A673 (cell line): ENCODE measurements at regions of chr19 and their contacts with region 1.

Region 1: GRCh38 chr19:2610637-2611482 is 91.6 kb downstream of the GNG7 start:
- DNase-seq: peak; percentile 88
- H3K4me3 ChIP-seq: peak overlapping the region; percentile 38
- H3K27ac ChIP-seq: no peak overlapping the region
- H3K4me1 ChIP-seq: no peaks in the 10 kb centered on the region
- H3K27me3 ChIP-seq: no peaks in the 10 kb centered on the region
- CTCF ChIP-seq: peak; percentile 95

Region 2: DNA sequence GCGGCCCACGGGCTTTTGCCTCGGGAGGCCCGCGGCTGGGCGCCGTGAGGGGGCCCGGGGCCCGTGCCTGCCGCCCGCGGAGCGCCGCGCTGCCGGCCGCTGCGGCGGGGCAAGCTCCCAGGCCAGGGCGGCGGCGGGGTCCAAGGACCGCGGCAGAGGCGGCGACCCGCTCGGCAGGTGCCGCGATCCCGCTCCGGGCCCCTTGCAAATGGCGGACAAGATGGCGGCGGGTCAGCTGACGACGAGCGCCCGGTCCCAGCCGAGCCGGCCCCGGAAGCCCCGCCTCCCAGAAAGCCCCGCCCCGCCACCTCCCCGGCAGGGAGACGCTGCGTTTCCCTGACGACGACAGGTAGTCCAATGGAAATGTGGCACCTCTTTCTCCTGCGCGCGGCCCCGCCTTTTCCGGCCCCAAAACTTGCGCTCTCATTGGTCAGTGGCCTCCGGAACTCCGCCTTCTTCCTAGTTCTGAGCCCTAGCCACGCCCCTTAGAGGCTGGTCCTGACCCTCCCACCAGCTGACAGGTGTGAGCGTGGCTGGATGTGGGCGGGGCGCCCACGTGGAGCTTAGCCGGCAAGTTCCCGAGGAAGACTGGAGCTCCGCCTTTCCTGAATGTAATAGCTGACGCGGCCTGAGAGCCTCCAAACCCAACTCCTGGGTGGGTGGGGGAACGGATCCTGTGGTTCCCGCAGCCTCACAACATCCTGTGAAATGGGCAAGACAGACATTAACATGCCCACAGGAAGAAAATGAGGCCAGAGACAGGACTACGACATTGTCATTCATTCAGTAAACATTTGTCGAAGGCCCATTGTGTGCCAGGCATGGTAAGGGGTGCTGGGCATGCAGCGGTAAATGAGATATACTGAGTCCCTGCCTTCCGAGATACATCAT is 459.3 kb before region 1 on chr19 and contains the start of gene AP3D1:
- CTCF ChIA-PET with region 1: no interaction called
- POLR2A ChIA-PET with region 1: no interaction called
- intact Hi-C with region 1: loop called (anchors 10 kb)
- DNase-seq: peak; percentile 100
- H3K4me3 ChIP-seq: peak within 1 kb of the TSS; percentile 99
- H3K27ac ChIP-seq: peak within 1 kb of the TSS; percentile 91
- H3K4me1 ChIP-seq: peaks cover 17% of the 10 kb centered on the region
- H3K27me3 ChIP-seq: no peaks in the 10 kb centered on the region
- CTCF ChIP-seq: no peak
- total RNA-seq, gene AP3D1: 148 and 154 TPM in 2 replicates

Region 3: GRCh38 chr19:2391118-2391725 is 219.6 kb before region 1 on chr19:
- CTCF ChIA-PET with region 1: no interaction called
- POLR2A ChIA-PET with region 1: no interaction called
- intact Hi-C with region 1: loop called (anchors 10 kb)
- DNase-seq: peak; percentile 82
- H3K4me3 ChIP-seq: no peak overlapping the region
- H3K27ac ChIP-seq: no peak overlapping the region
- H3K4me1 ChIP-seq: no peaks in the 10 kb centered on the region
- H3K27me3 ChIP-seq: no peaks in the 10 kb centered on the region
- CTCF ChIP-seq: peak; percentile 87

Region 4: DNA sequence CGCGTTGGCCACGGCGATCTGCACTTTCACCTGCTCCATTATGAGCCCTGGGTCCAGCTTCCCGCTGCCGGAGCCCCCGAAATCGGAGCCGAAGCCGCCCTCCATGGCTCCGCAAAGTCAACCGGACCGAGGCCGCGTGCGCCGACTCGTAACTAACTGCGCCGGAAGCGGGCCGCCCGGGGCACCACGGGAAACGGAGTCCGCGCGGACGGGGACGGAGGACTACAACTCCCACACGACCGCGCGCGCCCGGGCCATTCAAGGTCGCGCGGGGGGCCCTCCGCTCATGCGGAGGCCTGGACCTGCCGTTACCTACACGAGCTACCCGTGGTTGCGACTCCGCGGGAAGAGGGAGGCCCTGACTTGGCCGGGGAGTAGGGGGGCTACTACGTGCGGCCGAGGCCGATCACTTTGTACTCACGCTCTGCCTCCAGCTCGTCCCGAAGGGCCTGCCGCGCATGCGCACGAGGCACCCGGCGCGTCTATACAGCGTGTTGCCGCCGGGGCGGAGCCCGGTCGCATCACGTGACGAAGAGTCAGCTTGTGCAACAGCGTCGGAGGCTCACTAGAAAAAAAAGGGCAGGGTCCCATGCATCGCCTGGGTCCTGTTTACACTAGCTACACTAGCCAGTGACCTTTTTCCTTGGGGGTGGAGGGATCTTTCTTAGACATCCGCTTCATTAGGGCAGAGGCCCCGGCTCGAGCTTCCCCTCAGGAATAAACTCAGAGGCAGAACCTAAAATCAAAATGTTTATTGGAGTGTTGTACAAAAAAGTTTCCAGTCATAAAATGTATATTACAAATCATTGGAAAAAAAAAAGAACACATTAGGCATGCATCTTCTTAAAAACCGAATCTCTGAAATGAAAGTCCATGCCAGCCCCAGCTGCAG is 183.2 kb before region 1 on chr19 and contains the start of gene TIMM13:
- CTCF ChIA-PET with region 1: interaction called, 7 read pairs
- POLR2A ChIA-PET with region 1: no interaction called
- intact Hi-C with region 1: loop called (anchors 5 kb)
- DNase-seq: peak; percentile 98
- H3K4me3 ChIP-seq: peak within 1 kb of the TSS; percentile 90
- H3K27ac ChIP-seq: peak within 1 kb of the TSS; percentile 99
- H3K4me1 ChIP-seq: peaks cover 36% of the 10 kb centered on the region
- H3K27me3 ChIP-seq: no peaks in the 10 kb centered on the region
- CTCF ChIP-seq: no peak
- total RNA-seq, gene TIMM13: 206 and 213 TPM in 2 replicates

Region 5: GRCh38 chr19:2552859-2553258 is 58.0 kb before region 1 on chr19:
- CTCF ChIA-PET with region 1: interaction called, 10 read pairs
- POLR2A ChIA-PET with region 1: no interaction called
- intact Hi-C with region 1: no loop called
- DNase-seq: peak; percentile 91
- H3K4me3 ChIP-seq: peak overlapping the region; percentile 28
- H3K27ac ChIP-seq: peak overlapping the region; percentile 72
- H3K4me1 ChIP-seq: peaks cover 7% of the 10 kb centered on the region
- H3K27me3 ChIP-seq: no peaks in the 10 kb centered on the region
- CTCF ChIP-seq: no peak

Region 6: DNA sequence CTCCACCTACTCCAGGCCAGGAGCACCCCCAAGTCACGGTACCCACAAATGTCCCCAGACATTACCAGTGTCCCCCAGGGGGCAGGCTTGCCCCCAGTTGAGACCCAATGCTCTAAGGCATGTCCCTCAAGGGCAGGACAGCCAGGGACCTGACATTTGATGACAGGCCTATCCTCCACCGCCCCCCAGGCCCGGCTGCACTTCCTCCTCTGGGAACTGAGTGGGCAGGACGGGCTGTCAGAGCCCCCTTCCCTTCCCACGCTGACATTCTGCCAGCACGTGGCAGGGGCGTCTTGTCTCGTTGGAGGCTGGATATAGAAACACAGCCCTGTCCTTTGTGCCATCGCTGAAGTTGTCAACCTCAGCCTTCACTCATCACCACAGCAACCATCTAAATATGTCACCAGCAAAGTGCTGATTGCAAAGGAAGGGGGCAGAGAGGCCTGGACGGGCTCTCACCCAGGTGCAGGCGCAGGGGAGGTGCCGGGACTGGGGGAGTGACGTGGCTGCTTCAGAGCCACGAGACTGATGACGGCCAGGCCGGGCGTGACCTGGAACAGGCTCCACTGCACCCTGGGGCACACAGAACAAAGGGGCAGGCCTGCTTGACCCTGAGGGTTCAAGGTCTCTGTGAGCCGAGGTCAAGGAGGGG is 53.2 kb after region 1 on chr19:
- CTCF ChIA-PET with region 1: interaction called, 11 read pairs
- POLR2A ChIA-PET with region 1: no interaction called
- intact Hi-C with region 1: no loop called
- DNase-seq: no peak
- H3K4me3 ChIP-seq: no peak overlapping the region
- H3K27ac ChIP-seq: no peak overlapping the region
- H3K4me1 ChIP-seq: no peaks in the 10 kb centered on the region
- H3K27me3 ChIP-seq: no peaks in the 10 kb centered on the region
- CTCF ChIP-seq: 0 out of 2 replicates have a peak, but pooled peaks have one; percentile 11

Region 7: GRCh38 chr19:2782936-2783780 is 172.3 kb after region 1 on chr19 and contains the start of gene SGTA:
- CTCF ChIA-PET with region 1: no interaction called
- POLR2A ChIA-PET with region 1: no interaction called
- intact Hi-C with region 1: no loop called
- DNase-seq: peak; percentile 98
- H3K4me3 ChIP-seq: peak within 1 kb of the TSS; percentile 91
- H3K27ac ChIP-seq: peak within 1 kb of the TSS; percentile 91
- H3K4me1 ChIP-seq: peaks cover 18% of the 10 kb centered on the region
- H3K27me3 ChIP-seq: no peaks in the 10 kb centered on the region
- CTCF ChIP-seq: 0 out of 2 replicates have a peak, but pooled peaks have one; percentile 19
- total RNA-seq, gene SGTA: 101 and 106 TPM in 2 replicates

Region 8: GRCh38 chr19:3024870-3025550 is 414.1 kb after region 1 on chr19:
- CTCF ChIA-PET with region 1: no interaction called
- POLR2A ChIA-PET with region 1: no interaction called
- intact Hi-C with region 1: no loop called
- DNase-seq: no peak
- H3K4me3 ChIP-seq: no peak overlapping the region
- H3K27ac ChIP-seq: no peak overlapping the region
- H3K4me1 ChIP-seq: peaks cover 6% of the 10 kb centered on the region
- H3K27me3 ChIP-seq: peaks cover 3% of the 10 kb centered on the region
- CTCF ChIP-seq: no peak